Left lung (tissue), 14 donors: ENCODE measurements at regions of chr7 and their contacts with region 1.

Region 1: DNA sequence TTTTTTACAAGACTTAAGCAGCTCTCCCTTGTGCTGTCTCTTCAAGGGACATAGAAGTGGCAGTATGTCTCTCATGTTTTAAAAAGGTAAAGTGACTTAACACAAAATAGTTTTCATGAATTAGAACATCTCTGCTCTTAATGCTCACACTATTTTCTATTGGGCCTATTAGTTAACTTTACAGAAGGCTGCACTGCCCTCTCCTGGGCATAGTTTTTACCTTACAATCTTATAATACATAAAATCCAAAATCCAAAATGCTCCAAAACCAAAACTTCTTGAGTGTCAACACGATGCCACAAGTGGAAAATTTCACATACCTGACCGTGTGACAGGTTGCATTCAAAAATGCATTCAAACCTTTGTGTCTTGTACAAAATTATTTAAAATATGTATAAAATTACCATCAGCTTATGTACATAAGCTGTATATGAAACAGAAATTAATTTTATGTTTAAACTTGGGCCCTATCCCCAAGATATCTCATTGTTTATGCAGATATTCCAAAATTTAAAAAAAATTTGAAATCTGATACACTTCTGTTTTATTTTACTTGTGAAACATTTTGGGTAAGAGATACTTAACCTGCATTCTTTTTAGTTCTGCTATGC is 25.8 kb downstream of the TES start:
- DNase-seq: peak in 1 of 4 donors; percentile 61
- ATAC-seq: peak; percentile 73
- H3K4me3 ChIP-seq: no peak overlapping the region
- H3K27ac ChIP-seq: no peak overlapping the region
- H3K4me1 ChIP-seq: peaks cover 5 to 27% of the 10 kb centered on the region in 2 donors
- H3K27me3 ChIP-seq: no peaks in the 10 kb centered on the region
- CTCF ChIP-seq: peak; percentile 35 to 38

Region 2: DNA sequence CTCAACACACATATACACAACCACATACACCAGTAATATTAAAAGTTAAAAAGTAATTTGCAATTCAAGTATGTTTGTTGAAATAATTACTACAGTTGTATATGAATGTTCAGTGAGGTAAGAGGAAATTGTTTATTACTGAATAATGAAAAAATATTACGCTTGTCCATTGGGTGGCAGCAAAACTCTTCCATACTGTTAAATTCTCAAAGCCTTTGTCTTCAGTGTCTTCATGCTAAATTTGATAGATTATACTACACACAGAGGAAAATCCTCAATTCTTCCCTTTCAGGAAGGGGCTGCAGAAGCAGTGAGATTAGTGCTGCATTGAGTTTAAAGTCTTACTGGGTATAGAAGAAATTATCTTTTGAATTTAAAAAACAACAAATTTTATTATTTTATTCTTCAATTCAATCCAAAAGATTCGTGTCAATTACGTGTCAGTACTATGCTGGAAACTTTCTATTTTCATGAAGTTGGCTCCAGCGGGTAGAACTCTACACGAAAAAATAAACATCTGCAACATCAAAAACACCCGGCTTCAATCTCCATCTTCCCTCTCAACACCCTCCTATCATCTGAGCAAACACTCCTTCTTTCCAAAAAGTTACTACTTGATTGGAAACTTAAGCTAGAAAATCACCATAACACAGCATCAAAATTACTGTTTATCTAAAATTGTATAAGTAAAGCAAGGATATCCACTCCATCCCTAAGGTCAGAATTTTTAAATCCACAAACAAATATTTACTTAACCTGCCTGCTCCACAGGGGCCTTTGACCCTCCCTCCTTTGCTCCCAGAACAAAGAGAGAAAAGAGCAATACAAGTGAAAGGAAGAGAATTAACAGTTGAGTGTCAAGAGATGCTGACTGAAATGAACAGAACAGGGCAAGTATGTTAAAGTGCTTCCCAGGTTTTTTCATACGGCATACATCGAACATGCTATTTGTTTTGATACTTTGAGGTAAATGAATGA is 62.8 kb before region 1 on chr7:
- intact Hi-C with region 1: loop called in 1 of 2 experiments (anchors 10 kb)
- DNase-seq: peak in 2 of 4 donors; percentile 45 to 70
- ATAC-seq: peak; percentile 74
- H3K4me3 ChIP-seq: no peak overlapping the region
- H3K27ac ChIP-seq: no peak overlapping the region
- H3K4me1 ChIP-seq: no peaks in the 10 kb centered on the region
- H3K27me3 ChIP-seq: no peaks in the 10 kb centered on the region
- CTCF ChIP-seq: peak; percentile 43 to 53

Region 3: DNA sequence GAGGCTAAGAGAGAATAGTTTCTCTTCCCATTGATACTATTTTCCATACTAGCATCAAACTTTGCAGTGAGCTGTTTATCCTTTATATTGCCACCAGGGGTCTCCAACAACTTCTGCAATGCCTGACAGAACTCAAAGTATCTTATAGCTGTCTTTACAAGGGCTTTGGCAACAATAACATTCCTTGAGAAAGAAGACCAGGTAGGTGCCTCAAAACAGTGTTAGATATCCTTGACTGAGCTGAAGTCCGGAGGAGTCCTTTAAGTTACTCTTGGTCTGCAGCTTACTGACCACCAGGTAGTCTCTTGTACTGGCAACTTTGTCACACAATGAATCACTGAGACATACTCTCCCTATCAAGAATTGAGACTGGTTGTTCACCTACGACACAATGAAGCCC is 55.8 kb before region 1 on chr7:
- intact Hi-C with region 1: loop called (anchors 5 to 10 kb)
- DNase-seq: peak in 2 of 4 donors; percentile 31 to 52
- ATAC-seq: peak; percentile 90
- H3K4me3 ChIP-seq: no peak overlapping the region
- H3K27ac ChIP-seq: no peak overlapping the region
- H3K4me1 ChIP-seq: no peaks in the 10 kb centered on the region
- H3K27me3 ChIP-seq: no peaks in the 10 kb centered on the region
- CTCF ChIP-seq: peak; percentile 65 to 81

Region 4: DNA sequence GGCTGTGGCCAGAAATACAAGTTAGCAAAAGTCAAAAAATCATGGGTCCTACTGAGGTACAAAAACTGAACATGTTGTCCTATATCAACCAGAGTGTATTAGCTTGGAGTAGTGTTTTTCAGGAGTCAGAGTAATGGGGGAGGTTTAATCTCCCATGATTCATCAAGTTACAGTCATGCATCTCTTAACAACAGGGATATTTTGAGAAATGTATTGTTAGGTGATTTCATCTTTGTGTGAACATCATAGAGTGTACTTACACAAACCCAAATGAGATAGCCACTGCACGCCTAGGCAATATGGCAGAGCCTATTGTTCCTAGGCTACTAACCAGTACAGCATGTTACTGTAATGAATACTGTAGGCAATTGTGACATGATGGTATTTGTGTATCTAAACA is 40.7 kb before region 1 on chr7:
- intact Hi-C with region 1: no loop called
- DNase-seq: no peak
- ATAC-seq: no peak
- H3K4me3 ChIP-seq: no peak overlapping the region
- H3K27ac ChIP-seq: no peak overlapping the region
- H3K4me1 ChIP-seq: no peaks in the 10 kb centered on the region
- H3K27me3 ChIP-seq: no peaks in the 10 kb centered on the region
- CTCF ChIP-seq: no peak

Region 5: GRCh38 chr7:116340943-116341907 is 105.1 kb after region 1 on chr7:
- intact Hi-C with region 1: no loop called
- DNase-seq: no peak
- ATAC-seq: peak; percentile 55
- H3K4me3 ChIP-seq: no peak overlapping the region
- H3K27ac ChIP-seq: peak overlapping the region in 1 of 2 donors; percentile 25
- H3K4me1 ChIP-seq: peaks cover 0 to 14% of the 10 kb centered on the region in 2 donors
- H3K27me3 ChIP-seq: no peaks in the 10 kb centered on the region
- CTCF ChIP-seq: no peak